Heart left ventricle (tissue), 16 donors: ENCODE measurements at regions of chr12 and their contacts with region 1.

Region 1: GRCh38 chr12:123354600-123354999 is 10.0 kb downstream of the SBNO1 start:
- DNase-seq: no peak
- ATAC-seq: no peak
- H3K4me3 ChIP-seq: no peak overlapping the region
- H3K27ac ChIP-seq: no peak overlapping the region
- H3K4me1 ChIP-seq: peaks cover 0 to 44% (median 19%) of the 10 kb centered on the region in 12 donors
- H3K27me3 ChIP-seq: no peaks in the 10 kb centered on the region
- CTCF ChIP-seq: no peak
- POLR2A ChIP-seq: no peak

Region 2: GRCh38 chr12:123335490-123335889 is 19.1 kb before region 1 on chr12:
- intact Hi-C with region 1: loop called in 1 of 10 experiments (anchors 2 kb)
- DNase-seq: no peak
- ATAC-seq: no peak
- H3K4me3 ChIP-seq: no peak overlapping the region
- H3K27ac ChIP-seq: no peak overlapping the region
- H3K4me1 ChIP-seq: no peaks in the 10 kb centered on the region
- H3K27me3 ChIP-seq: no peaks in the 10 kb centered on the region
- CTCF ChIP-seq: no peak
- POLR2A ChIP-seq: no peak